ENCODE measurements at regions of chr17 and their contacts with region 1.

Region 1: DNA sequence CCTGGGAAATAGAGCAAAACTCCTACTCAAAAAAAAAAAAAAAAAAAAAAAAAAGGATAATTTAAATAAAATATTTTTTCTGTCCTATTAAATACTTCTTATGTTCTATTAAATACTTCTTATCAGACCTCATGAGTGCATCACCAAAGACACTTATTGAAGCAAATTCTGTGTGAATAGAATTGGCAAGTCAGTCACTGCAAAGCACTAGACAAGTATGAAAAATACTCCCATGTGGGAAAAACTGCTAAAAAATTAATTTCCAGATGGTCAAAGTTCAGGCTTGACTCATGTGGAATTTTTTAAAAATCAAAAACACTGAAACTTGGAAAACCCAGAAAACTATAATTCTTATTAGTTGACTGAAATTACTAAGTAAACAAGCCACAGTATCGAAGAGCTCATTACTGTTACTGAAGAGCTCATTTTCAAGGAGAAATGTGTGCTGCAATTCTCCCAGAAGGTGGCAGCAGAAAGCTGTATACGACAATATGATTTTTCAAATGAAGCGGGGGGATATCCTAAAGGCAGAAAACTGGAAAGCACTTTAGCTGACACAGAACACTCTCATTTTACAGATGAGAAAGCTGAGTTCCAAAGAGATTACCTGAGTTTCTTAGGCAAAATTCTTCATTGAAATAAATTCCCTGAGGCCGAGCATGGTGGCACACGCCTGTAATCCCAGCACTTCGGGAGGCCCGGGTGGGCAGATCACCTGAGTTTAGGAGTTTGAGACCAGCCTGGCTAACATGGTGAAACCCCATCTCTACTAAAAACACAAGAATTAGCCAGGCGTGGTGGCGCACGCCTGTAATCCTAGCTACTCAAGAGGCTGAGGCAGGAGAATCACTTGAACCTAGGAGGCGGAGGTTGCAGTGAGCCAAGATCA is 15.9 kb upstream of the FBXO47 start:
- DNase-seq: peak; percentile 38
- ATAC-seq: peak; percentile 76 to 77

Region 2: GRCh38 chr17:39132192-39132610 is 149.1 kb after region 1 on chr17:
- intact Hi-C with region 1: no loop called
- DNase-seq: peak; percentile 48
- ATAC-seq: peak; percentile 78 to 82

Region 3: DNA sequence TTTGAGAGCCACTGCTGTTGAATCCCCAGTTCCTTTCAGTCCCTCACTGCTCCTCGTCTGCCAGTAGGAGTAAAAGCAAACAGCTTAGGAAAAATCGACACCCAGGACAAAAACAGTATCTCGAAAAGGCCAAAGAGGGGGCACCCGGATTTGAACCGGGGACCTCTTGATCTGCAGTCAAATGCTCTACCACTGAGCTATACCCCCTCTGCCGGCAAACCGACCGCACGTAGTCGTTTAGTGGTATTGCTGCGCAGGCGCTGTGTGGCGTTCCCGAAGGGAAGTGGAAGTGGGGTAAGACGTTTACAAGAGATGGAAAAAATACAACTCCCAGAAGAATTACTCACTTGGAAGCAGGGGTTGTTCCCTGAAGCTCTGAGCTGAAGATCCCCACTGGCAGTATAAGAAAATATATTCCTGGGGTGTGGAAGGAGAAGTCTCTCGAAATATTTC is 170.5 kb after region 1 on chr17:
- intact Hi-C with region 1: loop called (anchors 2 to 5 kb)
- DNase-seq: peak; percentile 87
- ATAC-seq: peak; percentile 87 to 92

Region 4: GRCh38 chr17:39174907-39175694 is 192.0 kb after region 1 on chr17:
- intact Hi-C with region 1: loop called in 1 of 2 experiments (anchors 2 kb)
- DNase-seq: peak; percentile 86
- ATAC-seq: peak; percentile 73 to 75

Region 5: GRCh38 chr17:39244600-39245570 is 261.8 kb after region 1 on chr17:
- intact Hi-C with region 1: loop called in 1 of 2 experiments (anchors 5 kb)
- DNase-seq: peak; percentile 86
- ATAC-seq: peak; percentile 89 to 91